Keratinocyte (primary cell): ENCODE measurements at regions of chr7 and their contacts with region 1.

Region 1: GRCh38 chr7:124765401-124766352 is at the start of gene GPR37:
- DNase-seq: no peak
- H3K4me3 ChIP-seq: peak within 1 kb of the TSS; percentile 53 to 87 (median 73)
- H3K27ac ChIP-seq: no peak within 1 kb of the TSS
- H3K4me1 ChIP-seq: peaks cover 10% of the 10 kb centered on the region
- H3K27me3 ChIP-seq: peaks cover 18% of the 10 kb centered on the region
- CTCF ChIP-seq: peak; percentile 31 to 63 (median 61)
- polyA plus RNA-seq, gene GPR37: 0.28 to 0.91 TPM (median 0.58 TPM) in 3 replicates

Region 2: DNA sequence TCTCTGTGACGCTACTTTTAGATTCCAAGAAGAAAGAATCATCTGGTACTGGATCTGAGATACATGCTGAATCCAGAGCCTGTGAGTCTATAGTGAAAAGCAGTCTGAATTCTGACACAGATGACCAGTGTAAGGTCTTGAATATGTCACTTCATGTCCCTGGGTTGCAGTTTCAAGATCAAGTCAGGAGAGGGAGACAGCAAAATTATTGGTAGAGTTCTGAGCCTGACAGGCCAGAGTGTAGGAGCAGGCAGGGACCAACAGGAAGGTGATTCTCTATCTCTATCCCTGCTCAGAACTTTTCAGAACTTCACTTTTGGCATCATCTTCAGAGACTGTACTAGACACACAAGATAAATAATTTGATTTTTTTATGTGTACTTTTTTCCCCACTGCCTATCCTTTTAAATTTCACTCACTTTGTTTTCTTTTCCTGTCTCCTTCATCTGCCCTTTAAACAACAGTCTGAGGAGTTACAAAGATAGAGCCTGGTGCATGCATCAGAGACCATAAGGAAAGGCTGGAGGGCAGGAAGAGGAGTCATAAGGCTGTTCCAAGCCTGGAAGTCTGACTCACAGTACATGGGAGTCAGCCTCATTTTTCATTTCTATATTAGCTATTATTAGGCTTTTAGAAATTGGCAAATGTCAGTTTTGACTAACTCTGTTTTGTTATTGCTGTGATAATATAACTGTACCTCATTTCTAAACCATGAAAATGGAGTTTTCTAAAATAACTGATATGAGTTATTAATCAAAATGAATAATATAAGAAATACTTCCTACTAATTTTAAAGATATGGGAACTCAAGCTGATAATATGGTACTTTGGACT is 612.6 kb before region 1 on chr7:
- dilution Hi-C with region 1: loop called (anchors 25 kb)
- DNase-seq: no peak
- H3K4me3 ChIP-seq: no peak overlapping the region
- H3K27ac ChIP-seq: no peak overlapping the region
- H3K4me1 ChIP-seq: peaks cover 11% of the 10 kb centered on the region
- H3K27me3 ChIP-seq: no peaks in the 10 kb centered on the region
- CTCF ChIP-seq: peak; percentile 25 to 35 (median 35)

Region 3: DNA sequence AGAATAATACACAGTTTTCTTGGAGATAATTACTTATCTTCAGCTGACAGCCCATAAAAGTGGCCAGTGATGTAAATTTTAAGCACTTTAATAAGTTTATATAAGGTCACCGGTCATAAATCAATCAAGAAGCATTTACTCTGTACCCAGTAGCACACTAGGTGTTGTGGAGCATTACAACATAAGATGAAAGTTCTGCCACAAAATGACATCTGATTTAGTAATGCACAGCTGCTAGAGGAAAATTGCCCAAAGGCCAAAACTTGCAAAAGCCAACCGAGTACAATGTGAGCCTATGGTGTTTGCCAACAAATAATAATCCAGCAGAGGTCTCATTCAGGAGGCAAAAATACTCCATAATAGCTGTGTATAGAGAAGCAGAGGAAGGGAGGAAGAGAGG is 63.7 kb before region 1 on chr7:
- dilution Hi-C with region 1: no loop called
- DNase-seq: no peak
- H3K4me3 ChIP-seq: no peak overlapping the region
- H3K27ac ChIP-seq: no peak overlapping the region
- H3K4me1 ChIP-seq: peaks cover 12% of the 10 kb centered on the region
- H3K27me3 ChIP-seq: no peaks in the 10 kb centered on the region
- CTCF ChIP-seq: no peak